ENCODE measurements at regions of chr9 and their contacts with region 1.

Region 1: DNA sequence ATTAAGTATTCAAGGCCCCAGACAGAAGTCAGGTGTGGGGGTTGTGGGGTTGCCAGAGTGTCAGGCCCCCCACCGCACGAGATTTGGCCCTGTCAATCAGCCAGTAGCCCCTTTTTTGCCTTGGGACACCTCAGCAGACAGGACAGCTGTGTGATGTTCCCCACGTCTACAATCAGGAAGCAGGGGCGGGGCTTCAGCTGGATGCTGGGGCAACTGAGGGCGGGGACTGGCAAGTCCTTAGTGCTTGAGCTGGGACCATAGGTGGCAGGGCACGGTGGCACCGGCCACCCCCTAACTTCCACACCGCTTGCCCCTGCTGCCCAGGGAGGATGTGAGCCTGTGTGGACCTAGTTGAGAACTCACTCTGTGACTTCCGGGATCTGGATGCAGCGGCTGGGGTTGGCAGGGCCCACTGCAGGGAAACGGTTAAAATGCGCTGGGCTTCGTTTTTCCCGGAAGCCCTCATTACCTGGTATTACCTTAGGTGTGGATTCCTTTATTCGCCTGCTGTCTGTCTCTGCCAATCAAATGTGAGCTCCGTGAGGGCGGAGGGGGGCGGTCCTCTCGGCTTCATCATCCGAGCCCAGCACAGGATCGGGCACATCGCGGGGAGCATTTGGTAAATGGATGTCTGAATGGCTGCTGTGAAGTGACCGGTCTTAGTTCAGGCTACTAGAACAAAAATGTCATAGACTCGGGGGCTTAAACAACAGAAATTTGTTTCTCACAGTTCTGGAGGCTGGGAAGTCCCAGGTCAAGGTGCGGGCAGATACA is 7.5 kb upstream of the GTF3C5 start:
- DNase-seq: peak; percentile 79
- ATAC-seq: peak; percentile 69
- H3K4me3 Mint-ChIP-seq: peak overlapping the region; percentile 22
- H3K27ac Mint-ChIP-seq: peak overlapping the region; percentile 43
- H3K4me1 Mint-ChIP-seq: peaks cover 22% of the 10 kb centered on the region
- H3K27me3 Mint-ChIP-seq: peaks cover 3% of the 10 kb centered on the region

Region 2: DNA sequence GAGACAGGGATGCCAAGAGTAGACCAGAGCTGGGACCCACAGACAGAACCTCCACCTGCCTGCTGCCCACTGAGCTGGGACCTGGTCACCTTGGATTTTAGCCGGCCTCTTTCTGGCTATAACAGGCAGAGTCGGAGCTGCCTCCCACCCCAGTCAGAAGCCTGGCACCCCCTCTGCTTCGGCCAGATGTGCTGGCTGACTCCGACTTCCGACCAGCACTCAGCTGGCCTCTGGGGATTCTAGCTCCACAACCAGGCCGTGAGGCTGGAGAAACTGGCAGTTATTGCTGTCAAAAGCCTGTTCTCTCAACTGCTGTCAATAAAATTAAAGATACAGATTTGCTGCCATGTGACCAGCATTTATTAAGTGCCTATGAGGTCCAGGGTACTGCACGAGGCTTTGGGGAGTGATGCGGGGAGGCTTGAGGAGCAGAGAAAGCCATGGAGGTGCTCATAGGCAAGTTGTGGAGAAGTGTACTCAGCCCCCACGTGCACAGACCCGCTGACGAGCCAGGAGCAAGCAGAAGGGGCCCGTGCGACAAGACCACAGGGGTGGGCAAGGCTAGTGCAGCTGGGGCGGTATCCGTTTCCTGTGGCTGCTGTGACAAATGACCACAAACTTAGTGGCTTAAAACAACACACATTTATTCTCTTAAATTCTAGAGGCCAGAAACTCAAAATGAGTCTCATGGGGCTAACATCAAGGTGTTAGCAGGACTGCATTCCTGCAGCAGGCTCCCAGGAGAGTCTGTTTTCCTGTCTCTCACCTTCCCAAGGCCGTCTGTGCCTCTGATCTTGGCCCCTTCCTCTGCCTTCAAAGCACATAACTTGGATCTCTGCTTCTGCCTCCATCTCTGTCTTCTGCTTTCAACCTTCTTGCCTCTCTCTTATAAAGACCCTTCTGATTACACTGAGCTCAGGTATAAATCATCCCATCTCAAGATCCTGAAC is 31.7 kb before region 1 on chr9:
- CTCF ChIA-PET with region 1: interaction called, 12 read pairs
- POLR2A ChIA-PET with region 1: no interaction called
- DNase-seq: peak; percentile 62
- ATAC-seq: peak; percentile 32
- H3K4me3 Mint-ChIP-seq: no peak overlapping the region
- H3K27ac Mint-ChIP-seq: peak overlapping the region; percentile 37
- H3K4me1 Mint-ChIP-seq: peaks cover 30% of the 10 kb centered on the region
- H3K27me3 Mint-ChIP-seq: peaks cover 17% of the 10 kb centered on the region

Region 3: GRCh38 chr9:133004091-133004998 is 19.0 kb before region 1 on chr9:
- CTCF ChIA-PET with region 1: interaction called, 20 read pairs
- POLR2A ChIA-PET with region 1: no interaction called
- DNase-seq: no peak
- ATAC-seq: no peak
- H3K4me3 Mint-ChIP-seq: no peak overlapping the region
- H3K27ac Mint-ChIP-seq: no peak overlapping the region
- H3K4me1 Mint-ChIP-seq: peaks cover 18% of the 10 kb centered on the region
- H3K27me3 Mint-ChIP-seq: peaks cover 32% of the 10 kb centered on the region

Region 4: GRCh38 chr9:133035669-133036068 is 12.4 kb after region 1 on chr9:
- CTCF ChIA-PET with region 1: interaction called, 73 read pairs
- POLR2A ChIA-PET with region 1: interaction called, 5 read pairs
- DNase-seq: no peak
- ATAC-seq: no peak
- H3K4me3 Mint-ChIP-seq: no peak overlapping the region
- H3K27ac Mint-ChIP-seq: no peak overlapping the region
- H3K4me1 Mint-ChIP-seq: peaks cover 16% of the 10 kb centered on the region
- H3K27me3 Mint-ChIP-seq: no peaks in the 10 kb centered on the region

Region 5: GRCh38 chr9:133048569-133048968 is 25.3 kb after region 1 on chr9:
- CTCF ChIA-PET with region 1: interaction called, 10 read pairs
- POLR2A ChIA-PET with region 1: no interaction called
- DNase-seq: peak; percentile 54
- ATAC-seq: peak; percentile 84
- H3K4me3 Mint-ChIP-seq: no peak overlapping the region
- H3K27ac Mint-ChIP-seq: no peak overlapping the region
- H3K4me1 Mint-ChIP-seq: peaks cover 12% of the 10 kb centered on the region
- H3K27me3 Mint-ChIP-seq: no peaks in the 10 kb centered on the region

Region 6: GRCh38 chr9:133060417-133060841 is 37.1 kb after region 1 on chr9:
- CTCF ChIA-PET with region 1: interaction called, 12 read pairs
- POLR2A ChIA-PET with region 1: no interaction called
- DNase-seq: peak; percentile 48
- ATAC-seq: peak; percentile 34
- H3K4me3 Mint-ChIP-seq: peak overlapping the region; percentile 33
- H3K27ac Mint-ChIP-seq: peak overlapping the region; percentile 94
- H3K4me1 Mint-ChIP-seq: peaks cover 65% of the 10 kb centered on the region
- H3K27me3 Mint-ChIP-seq: no peaks in the 10 kb centered on the region